ENCODE measurements at regions of chr17 and their contacts with region 1.

Region 1: DNA sequence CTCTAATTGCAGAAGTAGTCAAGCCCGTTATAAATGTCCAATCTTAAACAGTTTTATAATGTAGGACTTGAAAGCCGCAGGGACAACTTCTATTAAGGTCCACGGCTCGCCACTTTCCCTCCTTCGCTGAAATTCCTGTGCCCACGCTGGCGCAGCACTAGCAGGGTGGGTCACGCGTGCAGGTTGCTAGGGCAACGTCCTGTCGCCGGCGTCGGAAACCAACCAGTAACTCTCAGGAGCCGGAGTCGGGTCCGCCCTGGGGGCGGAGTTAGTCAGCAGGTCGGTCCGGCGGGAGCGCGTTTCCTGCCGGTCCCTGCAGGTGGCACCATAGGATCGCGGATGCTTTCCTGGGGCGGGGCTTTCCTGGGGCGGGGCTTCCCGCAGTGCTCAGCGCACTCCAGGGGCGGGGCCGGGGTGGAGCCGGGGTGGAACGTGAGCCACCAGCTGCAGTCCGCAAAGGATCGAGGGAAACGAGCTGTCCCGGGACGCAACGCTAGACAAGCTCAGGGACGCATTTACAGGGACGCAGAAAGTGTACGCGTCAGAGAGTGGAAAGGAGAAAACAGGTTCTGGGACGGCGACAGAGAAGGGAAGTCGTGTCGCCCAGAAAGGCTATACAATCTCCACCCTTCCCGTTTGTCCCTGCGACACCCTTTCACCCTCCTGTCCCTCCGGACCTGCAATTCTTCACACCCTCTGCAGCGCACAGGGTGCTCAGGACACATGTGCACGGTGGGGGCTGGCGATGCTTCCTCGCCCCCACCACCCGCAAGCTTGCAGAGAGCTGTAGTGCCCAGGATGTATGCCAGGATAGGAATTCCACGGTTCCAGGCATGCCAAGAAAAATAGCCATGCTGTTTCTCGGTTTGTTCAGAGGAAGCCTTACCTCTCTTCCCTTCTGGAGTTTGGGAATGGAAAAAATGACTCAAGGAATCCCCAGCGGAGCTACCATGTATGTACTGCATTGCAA is 12.4 kb downstream of the COPZ2 start:
- DNase-seq: peak; percentile 91 to 97 (median 95)
- ATAC-seq: peak; percentile 98
- H3K4me3 ChIP-seq: peak overlapping the region; percentile 43
- H3K4me3 Mint-ChIP-seq: peak overlapping the region; percentile 83 to 92 (median 88)
- H3K27ac ChIP-seq: no peak overlapping the region
- H3K27ac Mint-ChIP-seq: peak overlapping the region in 8 of 9 donors; percentile 13 to 91 (median 73)
- H3K4me1 ChIP-seq: peaks cover 9 to 26% of the 10 kb centered on the region in 2 donors
- H3K4me1 Mint-ChIP-seq: peaks cover 23 to 46% (median 34%) of the 10 kb centered on the region in 7 donors
- H3K27me3 ChIP-seq: peaks cover 0 to 11% of the 10 kb centered on the region in 2 donors
- H3K27me3 Mint-ChIP-seq: peaks cover 28 to 50% (median 40%) of the 10 kb centered on the region in 5 donors

Region 2: GRCh38 chr17:47949136-47949759 is 76.0 kb before region 1 on chr17:
- CTCF ChIA-PET with region 1: no interaction called
- POLR2A ChIA-PET with region 1: no interaction called
- intact Hi-C with region 1: loop called (anchors 1 to 2 kb)
- DNase-seq: peak; percentile 47 to 87 (median 62)
- ATAC-seq: peak; percentile 82
- H3K4me3 ChIP-seq: peak overlapping the region; percentile 44
- H3K4me3 Mint-ChIP-seq: peak overlapping the region; percentile 63 to 90 (median 77)
- H3K27ac ChIP-seq: peak overlapping the region; percentile 55
- H3K27ac Mint-ChIP-seq: peak overlapping the region; percentile 57 to 86 (median 76)
- H3K4me1 ChIP-seq: peaks cover 22 to 40% of the 10 kb centered on the region in 2 donors
- H3K4me1 Mint-ChIP-seq: peaks cover 30 to 56% (median 49%) of the 10 kb centered on the region in 7 donors
- H3K27me3 ChIP-seq: no peaks in the 10 kb centered on the region
- H3K27me3 Mint-ChIP-seq: no peaks in the 10 kb centered on the region

Region 3: GRCh38 chr17:48037036-48037837 is 12.0 kb after region 1 on chr17 and contains the start of gene COPZ2:
- CTCF ChIA-PET with region 1: interaction called, 13 read pairs
- POLR2A ChIA-PET with region 1: interaction called, 3 read pairs
- intact Hi-C with region 1: loop called (anchors 1 kb)
- DNase-seq: peak; percentile 49 to 68 (median 64)
- ATAC-seq: peak; percentile 97
- H3K4me3 ChIP-seq: peak within 1 kb of the TSS; percentile 67
- H3K4me3 Mint-ChIP-seq: peak within 1 kb of the TSS; percentile 76 to 95 (median 88)
- H3K27ac ChIP-seq: peak within 1 kb of the TSS; percentile 45
- H3K27ac Mint-ChIP-seq: peak within 1 kb of the TSS in 4 of 9 donors; percentile 26 to 61 (median 45)
- H3K4me1 ChIP-seq: peaks cover 0 to 3% of the 10 kb centered on the region in 2 donors
- H3K4me1 Mint-ChIP-seq: peaks cover 0 to 17% (median 12%) of the 10 kb centered on the region in 7 donors
- H3K27me3 ChIP-seq: peaks cover 5 to 6% of the 10 kb centered on the region in 2 donors
- H3K27me3 Mint-ChIP-seq: peaks cover 6 to 55% (median 27%) of the 10 kb centered on the region in 5 donors
- total RNA-seq, gene COPZ2: 0.81 to 5.5 (median 1.9) TPM

Region 4: DNA sequence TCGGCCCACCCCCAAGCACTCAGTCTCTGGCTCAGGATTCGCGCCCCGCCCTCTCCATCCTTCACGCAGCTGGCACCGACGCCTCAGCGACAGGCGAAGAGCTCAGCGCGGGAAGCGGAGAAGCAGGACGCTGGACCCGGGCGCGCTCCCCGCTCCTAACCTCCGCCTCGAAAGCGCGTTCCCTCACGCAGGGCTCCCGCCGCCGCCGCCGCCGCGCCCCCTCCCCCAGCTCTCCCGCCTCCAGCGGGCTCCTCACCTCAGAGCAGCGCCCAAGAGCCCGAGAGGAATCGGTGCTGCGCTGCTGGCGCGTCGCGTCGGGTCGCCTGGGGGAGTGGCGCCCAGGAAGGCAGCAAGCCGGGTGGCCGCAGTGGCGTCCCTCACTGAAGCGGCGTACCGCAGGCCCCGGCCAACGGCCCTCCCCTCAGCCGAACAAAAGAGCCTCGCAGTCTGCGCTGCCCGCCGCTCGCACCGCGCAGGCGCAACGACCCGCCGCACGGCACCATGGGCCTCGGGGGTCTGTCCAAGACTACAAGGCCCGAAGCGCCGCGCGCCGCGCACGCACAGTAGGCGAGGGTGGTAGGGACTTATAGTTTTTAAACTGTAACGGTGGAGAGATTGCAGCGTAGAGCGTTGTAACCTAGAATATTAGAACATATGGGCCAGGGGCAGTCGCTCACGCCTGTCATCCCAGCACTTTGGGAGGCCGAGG is 75.9 kb after region 1 on chr17 and contains the start of gene CBX1:
- CTCF ChIA-PET with region 1: interaction called, 12 read pairs
- POLR2A ChIA-PET with region 1: no interaction called
- intact Hi-C with region 1: loop called (anchors 1 kb)
- DNase-seq: peak; percentile 87 to 95 (median 93)
- ATAC-seq: peak; percentile 98
- H3K4me3 ChIP-seq: peak within 1 kb of the TSS; percentile 78
- H3K4me3 Mint-ChIP-seq: peak within 1 kb of the TSS; percentile 83 to 95 (median 91)
- H3K27ac ChIP-seq: peak within 1 kb of the TSS; percentile 68
- H3K27ac Mint-ChIP-seq: peak within 1 kb of the TSS; percentile 78 to 94 (median 89)
- H3K4me1 ChIP-seq: peaks cover 6 to 11% of the 10 kb centered on the region in 2 donors
- H3K4me1 Mint-ChIP-seq: peaks cover 17 to 60% (median 54%) of the 10 kb centered on the region in 7 donors
- H3K27me3 ChIP-seq: no peaks in the 10 kb centered on the region
- H3K27me3 Mint-ChIP-seq: no peaks in the 10 kb centered on the region
- total RNA-seq, gene CBX1: 16.4 to 56.7 (median 33.5) TPM

Region 5: GRCh38 chr17:48457080-48457836 is 432.0 kb after region 1 on chr17:
- CTCF ChIA-PET with region 1: no interaction called
- POLR2A ChIA-PET with region 1: no interaction called
- intact Hi-C with region 1: loop called in 1 of 2 experiments (anchors 1 kb)
- DNase-seq: peak; percentile 60 to 84 (median 76)
- ATAC-seq: peak; percentile 93
- H3K4me3 ChIP-seq: peak overlapping the region; percentile 47
- H3K4me3 Mint-ChIP-seq: peak overlapping the region; percentile 50 to 84 (median 77)
- H3K27ac ChIP-seq: no peak overlapping the region
- H3K27ac Mint-ChIP-seq: peak overlapping the region in 6 of 9 donors; percentile 28 to 76 (median 44)
- H3K4me1 ChIP-seq: peaks cover 53% of the 10 kb centered on the region in 2 donors
- H3K4me1 Mint-ChIP-seq: peaks cover 37 to 60% (median 54%) of the 10 kb centered on the region in 7 donors
- H3K27me3 ChIP-seq: no peaks in the 10 kb centered on the region
- H3K27me3 Mint-ChIP-seq: peaks cover 0 to under 1% (median 0%) of the 10 kb centered on the region in 5 donors

Region 6: DNA sequence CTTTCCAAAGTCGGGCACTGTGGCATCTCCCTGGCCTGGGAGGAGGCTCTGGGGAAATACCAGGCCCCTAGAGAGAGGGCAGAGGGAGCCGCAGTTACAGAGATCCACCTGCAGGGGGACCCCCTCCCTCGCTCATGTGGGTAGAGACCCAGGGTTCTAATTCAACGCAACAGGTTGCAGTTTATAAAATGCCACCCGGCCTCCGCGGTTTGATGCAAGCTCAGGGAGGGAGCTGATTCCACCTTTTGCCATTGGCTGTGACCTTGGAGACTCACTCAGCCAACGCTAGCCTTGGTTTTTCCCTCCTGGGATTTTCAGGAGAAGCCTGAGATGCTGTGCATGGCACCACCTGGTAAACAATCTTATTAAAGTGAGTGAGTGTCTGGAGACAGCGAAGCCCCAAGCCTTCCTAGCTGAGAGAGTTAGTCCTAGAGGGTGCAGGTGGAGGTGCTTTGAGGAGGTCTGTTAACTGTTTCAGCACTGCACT is 779.7 kb after region 1 on chr17:
- CTCF ChIA-PET with region 1: no interaction called
- POLR2A ChIA-PET with region 1: no interaction called
- intact Hi-C with region 1: loop called in 1 of 2 experiments (anchors 5 kb)
- DNase-seq: peak; percentile 34 to 74 (median 61)
- ATAC-seq: peak; percentile 94
- H3K4me3 ChIP-seq: no peak overlapping the region
- H3K4me3 Mint-ChIP-seq: no peak overlapping the region
- H3K27ac ChIP-seq: no peak overlapping the region
- H3K27ac Mint-ChIP-seq: peak overlapping the region in 1 of 9 donors; percentile 16
- H3K4me1 ChIP-seq: no peaks in the 10 kb centered on the region
- H3K4me1 Mint-ChIP-seq: peaks cover 0 to 4% (median 0%) of the 10 kb centered on the region in 7 donors
- H3K27me3 ChIP-seq: peaks cover 0 to 3% of the 10 kb centered on the region in 2 donors
- H3K27me3 Mint-ChIP-seq: peaks cover 3 to 36% (median 13%) of the 10 kb centered on the region in 5 donors

Measured in naive thymus-derived CD4-positive, alpha-beta T cell (primary cell).